Activated naive CD4-positive, alpha-beta T cell treated with anti-CD3 and anti-CD28 coated beads for 36 hours (primary cell): ENCODE measurements at regions of chr2 and their contacts with region 1.

Region 1: GRCh38 chr2:42494355-42495233 is 812 bp upstream of the KCNG3 start:
- DNase-seq: peak; percentile 90
- H3K4me3 Mint-ChIP-seq: peak overlapping the region; percentile 94
- H3K27ac Mint-ChIP-seq: no peak overlapping the region
- H3K4me1 Mint-ChIP-seq: peaks cover 6% of the 10 kb centered on the region
- H3K27me3 Mint-ChIP-seq: peaks cover 10% of the 10 kb centered on the region

Region 2: GRCh38 chr2:42513257-42513918 is 18.8 kb after region 1 on chr2:
- CTCF ChIA-PET with region 1: interaction called, 5 read pairs
- intact Hi-C with region 1: loop called (anchors 1 kb)
- DNase-seq: peak; percentile 32
- H3K4me3 Mint-ChIP-seq: no peak overlapping the region
- H3K27ac Mint-ChIP-seq: no peak overlapping the region
- H3K4me1 Mint-ChIP-seq: peaks cover 9% of the 10 kb centered on the region
- H3K27me3 Mint-ChIP-seq: no peaks in the 10 kb centered on the region

Region 3: GRCh38 chr2:42652086-42652485 is 157.5 kb after region 1 on chr2:
- CTCF ChIA-PET with region 1: interaction called, 4 read pairs
- intact Hi-C with region 1: loop called (anchors 2 kb)
- DNase-seq: peak; percentile 56
- H3K4me3 Mint-ChIP-seq: peak overlapping the region; percentile 54
- H3K27ac Mint-ChIP-seq: peak overlapping the region; percentile 83
- H3K4me1 Mint-ChIP-seq: peaks cover 70% of the 10 kb centered on the region
- H3K27me3 Mint-ChIP-seq: no peaks in the 10 kb centered on the region

Region 4: DNA sequence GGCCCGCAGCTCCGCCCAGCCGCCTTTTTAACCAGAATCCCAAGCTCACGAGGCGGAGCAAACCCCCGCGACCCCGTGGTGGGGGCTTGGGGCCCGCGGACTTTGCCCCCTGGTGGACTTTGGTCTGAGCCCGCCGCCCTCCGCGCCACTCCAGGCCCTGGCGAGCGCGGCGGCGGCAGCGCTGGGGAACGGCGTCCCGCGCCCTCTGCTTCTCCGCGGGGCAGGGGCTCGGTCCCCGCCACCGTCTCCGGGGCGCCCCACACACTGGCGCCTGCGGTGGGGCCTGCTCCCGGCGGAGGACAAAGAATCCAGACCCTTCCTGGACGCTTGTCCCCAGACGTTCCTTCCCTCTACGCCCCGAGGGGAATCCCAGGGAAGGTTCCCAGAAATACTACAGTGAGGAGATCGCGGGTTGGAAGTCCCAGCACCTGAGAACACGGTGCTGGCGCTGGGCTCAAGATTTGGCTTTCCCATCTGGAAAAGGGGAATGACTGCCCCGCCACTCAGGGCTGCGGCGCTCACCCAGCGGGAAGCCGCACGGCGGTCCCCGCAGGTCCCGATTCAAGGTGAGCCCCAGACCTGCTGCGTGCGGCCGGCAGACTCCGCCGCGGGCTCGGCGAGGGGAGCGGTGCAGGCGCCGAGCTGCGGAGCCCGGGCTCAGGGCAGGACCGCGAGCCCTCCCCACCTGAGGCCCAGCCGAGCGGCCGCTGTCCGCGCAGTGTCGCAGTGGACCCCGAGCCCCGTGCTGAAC is 298.2 kb after region 1 on chr2 and contains the start of gene HAAO:
- CTCF ChIA-PET with region 1: no interaction called
- intact Hi-C with region 1: loop called (anchors 5 kb)
- DNase-seq: no peak
- H3K4me3 Mint-ChIP-seq: peak within 1 kb of the TSS; percentile 81
- H3K27ac Mint-ChIP-seq: no peak within 1 kb of the TSS
- H3K4me1 Mint-ChIP-seq: peaks cover 27% of the 10 kb centered on the region
- H3K27me3 Mint-ChIP-seq: peaks cover 40% of the 10 kb centered on the region
- total RNA-seq, gene HAAO: 0.41 to 0.52 TPM

Region 5: DNA sequence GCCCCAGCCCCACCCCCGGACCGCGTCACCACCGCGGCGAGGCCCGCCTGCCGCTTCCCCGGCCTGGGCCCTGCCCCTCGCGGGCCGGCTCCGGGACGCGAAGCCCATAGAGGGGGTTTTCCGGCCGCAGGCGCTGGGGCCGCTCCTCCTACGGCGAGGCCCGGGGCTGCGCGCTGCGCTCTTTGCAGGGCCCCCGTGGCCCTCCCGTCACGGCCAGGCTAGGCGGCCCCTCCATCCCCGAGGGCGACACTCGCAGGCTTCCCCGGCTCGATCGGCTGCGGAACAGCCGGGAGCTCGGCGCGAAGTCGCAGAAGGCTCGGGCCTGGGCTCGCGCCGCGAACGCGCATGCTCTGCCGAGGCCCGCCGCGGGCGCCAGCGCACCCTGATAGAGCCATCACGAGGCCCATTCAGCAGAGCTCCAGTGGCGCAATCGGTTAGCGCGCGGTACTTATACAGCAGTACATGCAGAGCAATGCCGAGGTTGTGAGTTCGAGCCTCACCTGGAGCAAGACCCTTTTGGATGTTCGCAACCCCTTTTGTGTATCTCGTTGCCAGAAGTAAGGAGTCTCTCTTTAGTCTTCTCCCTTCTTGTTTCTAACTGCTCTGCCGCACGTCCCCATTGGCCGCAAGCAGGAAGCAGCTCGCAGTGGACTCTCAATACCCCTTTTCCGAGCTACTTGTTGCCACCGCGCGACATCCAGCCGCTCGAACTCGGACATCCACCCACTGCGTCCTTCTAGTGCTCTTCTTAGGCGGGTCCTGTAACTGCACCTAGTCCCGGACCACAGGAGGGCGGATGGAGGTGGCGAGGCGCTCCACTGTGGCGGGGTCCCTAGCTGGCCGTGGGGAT is 315.8 kb after region 1 on chr2:
- CTCF ChIA-PET with region 1: interaction called, 3 read pairs
- intact Hi-C with region 1: loop called (anchors 2 kb)
- DNase-seq: peak; percentile 96
- H3K4me3 Mint-ChIP-seq: peak overlapping the region; percentile 88
- H3K27ac Mint-ChIP-seq: peak overlapping the region; percentile 93
- H3K4me1 Mint-ChIP-seq: peaks cover 11% of the 10 kb centered on the region
- H3K27me3 Mint-ChIP-seq: no peaks in the 10 kb centered on the region